PC-3 (cell line): ENCODE measurements at regions of chr1 and their contacts with region 1.

Region 1: GRCh38 chr1:186806477-186806876 is 22.3 kb upstream of the PLA2G4A start:
- DNase-seq: peak; percentile 68
- ATAC-seq: peak; percentile 86
- H3K4me3 ChIP-seq: no peak overlapping the region
- H3K27ac ChIP-seq: 0 out of 2 replicates have a peak overlapping the region, but pooled peaks have one; percentile 14
- H3K4me1 ChIP-seq: no peaks in the 10 kb centered on the region
- H3K27me3 ChIP-seq: no peaks in the 10 kb centered on the region
- CTCF ChIP-seq: peak; percentile 73

Region 2: DNA sequence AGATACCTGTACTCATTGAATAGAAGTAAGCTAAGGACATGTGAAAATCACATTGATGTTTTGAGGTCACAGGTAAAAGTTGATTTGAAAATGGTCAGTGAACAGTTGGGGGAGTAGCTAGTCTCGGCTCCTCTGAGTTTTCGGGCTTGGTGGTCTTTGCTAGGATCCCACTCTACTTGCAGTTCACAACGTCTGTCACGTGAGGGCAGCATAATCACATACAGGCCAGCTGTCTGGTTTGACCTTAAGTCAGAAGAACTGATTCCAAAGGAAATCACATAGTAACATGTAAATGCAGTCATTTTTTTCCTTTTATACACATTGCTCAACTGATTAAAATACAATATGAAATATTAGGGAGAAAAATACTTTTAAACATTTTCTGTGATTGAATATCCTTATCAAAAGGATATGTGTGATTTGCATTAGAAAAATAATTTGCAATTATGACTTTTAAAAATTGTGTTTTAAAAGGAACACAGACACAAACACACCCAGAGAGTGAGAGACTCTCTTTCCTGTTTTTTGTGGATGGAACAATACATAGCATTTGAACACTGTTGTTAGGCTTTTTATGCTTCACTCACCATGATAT is 323.7 kb before region 1 on chr1:
- CTCF ChIA-PET with region 1: no interaction called
- POLR2A ChIA-PET with region 1: no interaction called
- intact Hi-C with region 1: loop called (anchors 1 kb)
- DNase-seq: peak; percentile 70
- ATAC-seq: peak; percentile 28; the same call in 1 of the 2 replicates
- H3K4me3 ChIP-seq: no peak overlapping the region
- H3K27ac ChIP-seq: peak overlapping the region; percentile 72
- H3K4me1 ChIP-seq: peaks cover 22% of the 10 kb centered on the region
- H3K27me3 ChIP-seq: no peaks in the 10 kb centered on the region
- CTCF ChIP-seq: peak; percentile 91

Region 3: GRCh38 chr1:186680245-186681061 is 126.0 kb before region 1 on chr1 and contains the start of gene PTGS2:
- CTCF ChIA-PET with region 1: interaction called, 3 read pairs
- POLR2A ChIA-PET with region 1: no interaction called
- intact Hi-C with region 1: loop called (anchors 1 kb)
- DNase-seq: peak; percentile 55
- ATAC-seq: peak; percentile 92
- H3K4me3 ChIP-seq: peak within 1 kb of the TSS; percentile 65
- H3K27ac ChIP-seq: peak within 1 kb of the TSS; percentile 14; the same call in 1 of the 2 replicates
- H3K4me1 ChIP-seq: no peaks in the 10 kb centered on the region
- H3K27me3 ChIP-seq: no peaks in the 10 kb centered on the region
- CTCF ChIP-seq: peak; percentile 47; the same call in 1 of the 2 replicates
- total RNA-seq, gene PTGS2: 4.9 and 7.9 TPM in 2 replicates

Region 4: GRCh38 chr1:186915555-186915954 is 109.1 kb after region 1 on chr1:
- CTCF ChIA-PET with region 1: no interaction called
- POLR2A ChIA-PET with region 1: no interaction called
- intact Hi-C with region 1: loop called (anchors 2 kb)
- DNase-seq: peak; percentile 12
- ATAC-seq: no peak
- H3K4me3 ChIP-seq: no peak overlapping the region
- H3K27ac ChIP-seq: no peak overlapping the region
- H3K4me1 ChIP-seq: no peaks in the 10 kb centered on the region
- H3K27me3 ChIP-seq: no peaks in the 10 kb centered on the region
- CTCF ChIP-seq: peak; percentile 44